Heart right ventricle (tissue), 16 donors: ENCODE measurements at regions of chr14 and their contacts with region 1.

Region 1: DNA sequence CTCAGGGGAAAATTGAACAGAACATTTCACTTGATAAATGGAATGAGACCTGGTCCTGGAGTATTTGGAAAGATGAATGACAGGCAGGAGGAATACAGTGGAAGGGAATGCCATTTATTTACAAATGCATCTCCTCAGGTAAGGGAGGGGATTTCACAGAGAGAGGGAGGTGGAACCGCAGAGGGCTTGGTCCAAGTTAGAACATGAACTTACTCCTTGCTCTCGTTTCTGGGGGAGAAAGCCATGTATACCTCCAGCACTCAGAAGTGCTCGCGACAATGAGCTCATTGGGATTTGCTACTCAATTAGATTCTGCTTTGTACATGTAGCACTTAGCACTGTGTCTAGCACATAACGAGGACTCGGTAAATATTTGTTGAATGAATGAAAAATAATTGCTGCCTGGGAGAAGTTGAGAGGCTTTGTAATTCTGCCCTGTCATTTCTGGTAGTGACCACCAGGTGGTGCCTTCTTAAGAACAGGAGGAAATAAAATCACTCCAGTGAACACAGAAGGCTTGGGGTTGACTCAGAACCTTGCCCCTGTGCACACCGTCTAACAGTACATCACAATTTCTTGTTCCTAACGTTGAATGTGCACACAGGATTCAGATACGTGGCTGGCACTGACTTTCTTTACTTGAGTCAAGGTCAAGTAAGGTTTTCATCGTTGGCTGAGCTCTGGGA is 91.6 kb downstream of the RGS6 start:
- DNase-seq: peak in 1 of 2 donors; percentile 14
- ATAC-seq: peak in 7 of 8 donors; percentile 25 to 72 (median 57)
- H3K4me3 ChIP-seq: no peak overlapping the region
- H3K27ac ChIP-seq: peak overlapping the region in 3 of 10 donors; percentile 7 to 37 (median 9)
- H3K4me1 ChIP-seq: peaks cover 0 to 33% (median 16%) of the 10 kb centered on the region in 9 donors
- H3K27me3 ChIP-seq: no peaks in the 10 kb centered on the region
- CTCF ChIP-seq: peak; percentile 34 to 72 (median 60)

Region 2: GRCh38 chr14:72291908-72292688 is 268.2 kb after region 1 on chr14:
- intact Hi-C with region 1: loop called in 8 of 10 experiments (anchors 2 to 10 kb)
- DNase-seq: peak in 1 of 2 donors; percentile 29
- ATAC-seq: peak; percentile 81 to 88 (median 84)
- H3K4me3 ChIP-seq: peak overlapping the region in 8 of 10 donors; percentile 11 to 42 (median 26)
- H3K27ac ChIP-seq: peak overlapping the region in 2 of 10 donors; percentile 35 to 42
- H3K4me1 ChIP-seq: peaks cover 0 to 5% (median 0%) of the 10 kb centered on the region in 9 donors
- H3K27me3 ChIP-seq: no peaks in the 10 kb centered on the region
- CTCF ChIP-seq: peak; percentile 60 to 88 (median 81)

Region 3: GRCh38 chr14:72420725-72421474 is 397.0 kb after region 1 on chr14:
- intact Hi-C with region 1: loop called in 3 of 10 experiments (anchors 5 to 10 kb)
- DNase-seq: peak; percentile 67 to 72
- ATAC-seq: peak in 3 of 8 donors; percentile 57 to 69 (median 57)
- H3K4me3 ChIP-seq: no peak overlapping the region
- H3K27ac ChIP-seq: no peak overlapping the region
- H3K4me1 ChIP-seq: peaks cover 0 to 3% (median 0%) of the 10 kb centered on the region in 9 donors
- H3K27me3 ChIP-seq: no peaks in the 10 kb centered on the region
- CTCF ChIP-seq: peak; percentile 76 to 96 (median 92)